ENCODE measurements at regions of chr1 and their contacts with region 1.

Region 1: DNA sequence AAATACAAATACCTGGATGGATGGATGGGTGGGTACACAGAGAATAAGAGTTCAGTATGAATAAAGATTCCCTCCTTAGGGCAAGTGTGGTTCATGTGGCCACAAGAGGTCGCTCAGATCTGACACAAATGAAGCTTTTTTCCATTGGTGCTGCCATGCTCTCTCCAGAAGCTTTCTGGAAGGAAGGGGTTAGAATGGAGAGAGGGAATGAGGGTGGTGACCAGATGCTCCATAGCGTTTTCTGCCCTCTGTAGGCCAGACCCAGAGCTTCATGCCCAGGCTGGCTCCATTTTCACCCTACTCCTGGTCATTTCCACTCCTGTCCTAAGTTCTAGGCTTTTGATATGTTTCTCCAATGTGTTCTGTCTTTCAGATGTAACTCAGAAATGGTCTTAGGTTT is 3.3 kb upstream of the FCRL6 start:
- DNase-seq: peak; percentile 23 to 69 (median 30)
- H3K4me3 ChIP-seq: no peak overlapping the region
- H3K4me3 Mint-ChIP-seq: peak overlapping the region in 2 of 7 donors; percentile 10 to 42
- H3K27ac ChIP-seq: no peak overlapping the region
- H3K27ac Mint-ChIP-seq: peak overlapping the region in 3 of 8 donors; percentile 12 to 44 (median 33)
- H3K4me1 ChIP-seq: peaks cover 29% of the 10 kb centered on the region
- H3K4me1 Mint-ChIP-seq: peaks cover 52 to 55% (median 54%) of the 10 kb centered on the region in 3 donors
- H3K27me3 ChIP-seq: no peaks in the 10 kb centered on the region
- H3K27me3 Mint-ChIP-seq: peaks cover 0 to 1% of the 10 kb centered on the region in 2 donors

Region 2: DNA sequence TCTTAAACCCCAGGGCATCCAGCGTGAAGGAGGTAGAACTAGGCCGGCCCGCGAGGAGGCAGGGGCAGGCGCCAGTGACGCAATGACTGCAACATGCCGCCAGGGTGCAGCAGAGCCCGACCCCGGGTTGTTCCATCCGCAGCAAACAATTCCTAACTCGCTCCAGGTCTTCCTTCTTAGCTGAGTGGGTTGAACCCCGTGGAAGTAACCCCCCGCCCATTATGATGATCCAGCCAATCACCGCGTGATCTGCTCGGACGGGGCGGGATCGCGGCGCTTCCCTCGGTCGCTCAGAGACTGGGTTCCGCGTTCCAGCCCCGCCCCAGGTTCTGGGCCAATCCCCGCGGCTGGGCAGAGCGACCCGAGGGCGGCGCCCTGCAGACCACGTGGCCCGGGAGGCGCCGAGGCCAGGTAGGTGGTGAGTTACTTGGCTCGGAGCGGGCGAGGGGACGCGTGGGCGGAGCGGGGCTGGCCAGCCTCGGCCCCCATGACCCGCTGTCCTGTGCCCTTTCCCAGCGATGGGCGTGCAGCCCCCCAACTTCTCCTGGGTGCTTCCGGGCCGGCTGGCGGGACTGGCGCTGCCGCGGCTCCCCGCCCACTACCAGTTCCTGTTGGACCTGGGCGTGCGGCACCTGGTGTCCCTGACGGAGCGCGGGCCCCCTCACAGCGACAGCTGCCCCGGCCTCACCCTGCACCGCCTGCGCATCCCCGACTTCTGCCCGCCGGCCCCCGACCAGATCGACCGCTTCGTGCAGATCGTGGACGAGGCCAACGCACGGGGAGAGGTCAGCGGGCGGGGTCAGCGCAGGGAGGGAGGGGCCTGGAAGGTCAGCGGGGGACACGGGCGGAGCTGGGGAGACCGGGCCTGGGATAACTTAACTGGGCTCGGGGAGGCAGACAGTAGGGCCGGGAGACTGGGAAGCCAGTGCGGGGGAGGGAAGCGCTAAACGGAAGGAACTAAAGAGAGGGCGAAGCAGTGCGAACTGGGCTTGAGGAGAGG is 18.0 kb before region 1 on chr1 and contains the start of gene DUSP23:
- CTCF ChIA-PET with region 1: interaction called, 30 read pairs
- POLR2A ChIA-PET with region 1: no interaction called
- DNase-seq: peak; percentile 94 to 96 (median 96)
- H3K4me3 ChIP-seq: peak within 1 kb of the TSS; percentile 63
- H3K4me3 Mint-ChIP-seq: peak within 1 kb of the TSS; percentile 81 to 95 (median 89)
- H3K27ac ChIP-seq: peak within 1 kb of the TSS; percentile 58
- H3K27ac Mint-ChIP-seq: peak within 1 kb of the TSS; percentile 8 to 92 (median 88)
- H3K4me1 ChIP-seq: peaks cover 9% of the 10 kb centered on the region
- H3K4me1 Mint-ChIP-seq: peaks cover 39 to 57% (median 43%) of the 10 kb centered on the region in 3 donors
- H3K27me3 ChIP-seq: no peaks in the 10 kb centered on the region
- H3K27me3 Mint-ChIP-seq: peaks cover 0 to 1% of the 10 kb centered on the region in 2 donors
- total RNA-seq, gene DUSP23: 35.5 to 38.1 TPM

Region 3: GRCh38 chr1:159826441-159827101 is 27.7 kb after region 1 on chr1 and contains the start of gene SLAMF8:
- CTCF ChIA-PET with region 1: interaction called, 18 read pairs
- POLR2A ChIA-PET with region 1: interaction called, 5 read pairs
- DNase-seq: peak; percentile 33 to 82 (median 51)
- H3K4me3 ChIP-seq: peak within 1 kb of the TSS; percentile 38
- H3K4me3 Mint-ChIP-seq: peak within 1 kb of the TSS; percentile 57 to 90 (median 80)
- H3K27ac ChIP-seq: peak within 1 kb of the TSS; percentile 39
- H3K27ac Mint-ChIP-seq: peak within 1 kb of the TSS; percentile 55 to 97 (median 88)
- H3K4me1 ChIP-seq: peaks cover 57% of the 10 kb centered on the region
- H3K4me1 Mint-ChIP-seq: peaks cover 82 to 90% (median 83%) of the 10 kb centered on the region in 3 donors
- H3K27me3 ChIP-seq: no peaks in the 10 kb centered on the region
- H3K27me3 Mint-ChIP-seq: peaks cover 0 to 6% of the 10 kb centered on the region in 2 donors
- total RNA-seq, gene SLAMF8: 3.2 to 4.0 TPM

Region 4: DNA sequence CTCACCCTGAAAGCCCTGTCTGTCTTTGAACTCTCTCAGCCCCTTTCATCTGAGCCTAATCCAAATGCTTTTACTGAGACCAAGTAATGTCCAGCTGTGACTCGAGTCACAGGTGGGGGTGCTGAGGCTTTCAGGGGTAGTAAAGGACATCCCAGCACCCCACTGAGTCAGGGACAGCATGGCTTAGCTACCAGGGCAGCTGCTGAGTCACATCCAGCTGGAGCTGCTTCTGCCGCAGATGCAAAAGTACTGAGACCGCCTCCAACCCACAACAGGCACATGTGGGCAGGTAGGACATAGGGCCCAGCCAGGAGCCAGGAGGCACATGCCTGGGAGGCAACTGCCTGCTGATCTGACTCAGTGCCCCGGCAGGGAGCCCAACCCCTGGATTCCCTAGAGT is 70.3 kb after region 1 on chr1:
- CTCF ChIA-PET with region 1: interaction called, 12 read pairs
- POLR2A ChIA-PET with region 1: no interaction called
- DNase-seq: no peak
- H3K4me3 ChIP-seq: no peak overlapping the region
- H3K4me3 Mint-ChIP-seq: no peak overlapping the region
- H3K27ac ChIP-seq: no peak overlapping the region
- H3K27ac Mint-ChIP-seq: no peak overlapping the region
- H3K4me1 ChIP-seq: peaks cover 14% of the 10 kb centered on the region
- H3K4me1 Mint-ChIP-seq: peaks cover 21 to 40% (median 35%) of the 10 kb centered on the region in 3 donors
- H3K27me3 ChIP-seq: no peaks in the 10 kb centered on the region
- H3K27me3 Mint-ChIP-seq: peaks cover 2 to 4% of the 10 kb centered on the region in 2 donors

Region 5: DNA sequence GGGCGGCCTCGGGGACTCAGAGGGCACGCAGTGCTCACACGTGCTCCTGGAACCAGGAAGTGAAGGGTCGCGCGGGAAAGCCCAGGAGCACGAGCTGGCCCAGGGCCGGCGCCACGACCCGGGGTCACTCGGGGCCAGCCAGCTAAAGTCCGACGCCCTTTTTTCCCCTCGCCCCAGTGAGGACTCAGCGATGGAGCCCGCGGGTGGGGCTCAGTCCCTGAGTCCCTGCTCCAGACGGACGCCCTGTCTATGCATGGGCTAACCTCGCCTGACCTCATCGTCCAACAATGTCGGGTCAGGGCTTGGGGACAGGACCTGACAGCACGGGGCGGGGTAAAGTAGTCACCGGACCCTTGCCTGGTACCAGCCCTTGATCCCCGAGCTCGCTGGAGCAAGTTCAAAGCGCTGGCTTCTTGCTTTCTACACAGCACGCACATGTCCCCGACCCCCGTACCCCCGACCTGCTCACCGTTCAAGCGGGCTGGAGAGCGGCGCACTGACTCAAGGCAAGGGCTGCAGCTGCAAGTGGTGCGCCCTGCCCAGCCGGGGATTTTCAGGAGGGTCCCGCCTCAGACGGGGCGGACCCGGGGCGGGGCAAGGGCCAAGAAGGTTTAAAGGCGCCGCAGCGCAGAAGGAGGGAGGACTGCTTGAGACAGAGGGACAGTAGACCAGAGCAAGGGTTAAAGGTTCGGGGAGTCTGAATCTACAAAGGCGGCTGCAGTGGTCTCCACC is 126.3 kb after region 1 on chr1 and contains the start of gene TAGLN2:
- CTCF ChIA-PET with region 1: interaction called, 11 read pairs
- POLR2A ChIA-PET with region 1: interaction called, 3 read pairs
- DNase-seq: peak; percentile 79 to 93 (median 87)
- H3K4me3 ChIP-seq: peak within 1 kb of the TSS; percentile 100
- H3K4me3 Mint-ChIP-seq: peak within 1 kb of the TSS; percentile 89 to 99 (median 96)
- H3K27ac ChIP-seq: peak within 1 kb of the TSS; percentile 100
- H3K27ac Mint-ChIP-seq: peak within 1 kb of the TSS; percentile 97 to 100 (median 100)
- H3K4me1 ChIP-seq: peaks cover 44% of the 10 kb centered on the region
- H3K4me1 Mint-ChIP-seq: peaks cover 50 to 61% (median 52%) of the 10 kb centered on the region in 3 donors
- H3K27me3 ChIP-seq: no peaks in the 10 kb centered on the region
- H3K27me3 Mint-ChIP-seq: peaks cover 0 to 20% of the 10 kb centered on the region in 2 donors
- total RNA-seq, gene TAGLN2: 566 to 578 TPM